ENCODE measurements at regions of chr6 and their contacts with region 1.

Region 1: GRCh38 chr6:722077-722524 is 29.2 kb upstream of the EXOC2 start:
- DNase-seq: peak; percentile 76
- H3K4me3 ChIP-seq: no peak overlapping the region
- H3K27ac ChIP-seq: no peak overlapping the region
- H3K27me3 ChIP-seq: peaks cover 3% of the 10 kb centered on the region
- CTCF ChIP-seq: peak; percentile 98

Region 2: DNA sequence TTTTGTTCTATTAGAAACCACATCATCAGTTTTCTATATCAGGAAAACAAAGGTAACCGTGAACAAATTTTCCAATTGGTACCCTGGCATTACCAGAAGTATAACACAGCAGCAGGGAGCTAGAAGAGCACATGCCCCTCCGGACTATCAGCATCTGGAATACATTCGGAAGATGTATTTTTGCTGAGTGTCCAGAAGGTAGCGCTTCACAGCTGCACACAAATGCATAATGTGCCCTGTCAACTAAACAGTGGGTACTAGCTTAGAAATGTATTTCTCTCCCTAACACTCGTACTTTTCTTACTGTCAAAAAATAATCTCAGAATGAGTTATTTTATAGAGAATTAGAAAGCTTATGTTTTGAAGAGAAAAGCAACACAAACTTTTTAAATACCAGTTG is 142.8 kb before region 1 on chr6:
- CTCF ChIA-PET with region 1: interaction called, 10 read pairs
- POLR2A ChIA-PET with region 1: no interaction called
- DNase-seq: no peak
- H3K4me3 ChIP-seq: no peak overlapping the region
- H3K27ac ChIP-seq: no peak overlapping the region
- H3K27me3 ChIP-seq: no peaks in the 10 kb centered on the region
- CTCF ChIP-seq: peak; percentile 46

Region 3: GRCh38 chr6:606829-607379 is 115.2 kb before region 1 on chr6:
- CTCF ChIA-PET with region 1: interaction called, 11 read pairs
- POLR2A ChIA-PET with region 1: no interaction called
- DNase-seq: no peak
- H3K4me3 ChIP-seq: no peak overlapping the region
- H3K27ac ChIP-seq: no peak overlapping the region
- H3K27me3 ChIP-seq: no peaks in the 10 kb centered on the region
- CTCF ChIP-seq: no peak

Region 4: GRCh38 chr6:692855-693722 is 29.0 kb before region 1 on chr6 and contains the start of gene EXOC2:
- CTCF ChIA-PET with region 1: interaction called, 16 read pairs
- POLR2A ChIA-PET with region 1: no interaction called
- DNase-seq: peak; percentile 36
- H3K4me3 ChIP-seq: peak within 1 kb of the TSS; percentile 94
- H3K27ac ChIP-seq: no peak within 1 kb of the TSS
- H3K27me3 ChIP-seq: no peaks in the 10 kb centered on the region
- CTCF ChIP-seq: 0 out of 2 replicates have a peak, but pooled peaks have one; percentile 16
- polyA plus RNA-seq, gene EXOC2: 27.8 and 33.4 TPM in 2 replicates

Region 5: DNA sequence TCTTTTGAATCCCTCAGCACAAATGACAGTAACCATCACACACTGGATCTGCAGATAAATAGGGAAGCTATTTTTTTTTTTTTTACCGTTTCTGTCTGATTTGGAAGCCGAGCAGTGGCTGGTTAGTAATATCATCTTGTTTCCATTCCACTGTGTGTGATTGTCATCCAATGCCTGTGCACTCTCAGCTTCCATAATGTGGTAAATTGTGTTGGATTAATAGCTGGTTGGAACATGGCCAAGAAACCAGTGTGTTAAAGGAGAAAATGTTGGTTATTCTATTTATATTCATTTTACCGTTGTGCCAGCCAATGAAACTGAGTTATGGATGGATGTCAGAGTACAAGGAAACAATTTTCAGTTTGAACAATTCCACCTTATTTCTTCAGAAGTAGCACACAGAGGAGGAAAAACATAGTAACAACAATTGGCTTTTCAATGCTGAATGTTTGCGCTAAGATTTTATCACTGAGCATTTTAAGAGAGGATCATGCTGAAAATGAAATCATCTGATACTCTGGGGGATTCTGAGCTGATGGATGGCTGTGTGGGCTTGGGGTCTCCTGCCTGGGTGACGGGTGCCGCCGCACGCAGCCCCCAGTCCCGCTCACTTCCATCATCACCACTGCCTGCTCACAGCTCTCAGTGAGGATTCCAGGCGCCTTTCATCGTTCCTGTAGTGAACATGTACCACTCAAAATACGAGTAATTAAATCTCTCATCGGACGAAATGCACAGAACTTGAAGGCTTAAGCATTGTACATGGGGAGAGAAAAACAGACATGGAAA is 11.5 kb after region 1 on chr6:
- CTCF ChIA-PET with region 1: interaction called, 17 read pairs
- POLR2A ChIA-PET with region 1: no interaction called
- DNase-seq: no peak
- H3K4me3 ChIP-seq: no peak overlapping the region
- H3K27ac ChIP-seq: no peak overlapping the region
- H3K27me3 ChIP-seq: peaks cover 11% of the 10 kb centered on the region
- CTCF ChIP-seq: no peak

Region 6: DNA sequence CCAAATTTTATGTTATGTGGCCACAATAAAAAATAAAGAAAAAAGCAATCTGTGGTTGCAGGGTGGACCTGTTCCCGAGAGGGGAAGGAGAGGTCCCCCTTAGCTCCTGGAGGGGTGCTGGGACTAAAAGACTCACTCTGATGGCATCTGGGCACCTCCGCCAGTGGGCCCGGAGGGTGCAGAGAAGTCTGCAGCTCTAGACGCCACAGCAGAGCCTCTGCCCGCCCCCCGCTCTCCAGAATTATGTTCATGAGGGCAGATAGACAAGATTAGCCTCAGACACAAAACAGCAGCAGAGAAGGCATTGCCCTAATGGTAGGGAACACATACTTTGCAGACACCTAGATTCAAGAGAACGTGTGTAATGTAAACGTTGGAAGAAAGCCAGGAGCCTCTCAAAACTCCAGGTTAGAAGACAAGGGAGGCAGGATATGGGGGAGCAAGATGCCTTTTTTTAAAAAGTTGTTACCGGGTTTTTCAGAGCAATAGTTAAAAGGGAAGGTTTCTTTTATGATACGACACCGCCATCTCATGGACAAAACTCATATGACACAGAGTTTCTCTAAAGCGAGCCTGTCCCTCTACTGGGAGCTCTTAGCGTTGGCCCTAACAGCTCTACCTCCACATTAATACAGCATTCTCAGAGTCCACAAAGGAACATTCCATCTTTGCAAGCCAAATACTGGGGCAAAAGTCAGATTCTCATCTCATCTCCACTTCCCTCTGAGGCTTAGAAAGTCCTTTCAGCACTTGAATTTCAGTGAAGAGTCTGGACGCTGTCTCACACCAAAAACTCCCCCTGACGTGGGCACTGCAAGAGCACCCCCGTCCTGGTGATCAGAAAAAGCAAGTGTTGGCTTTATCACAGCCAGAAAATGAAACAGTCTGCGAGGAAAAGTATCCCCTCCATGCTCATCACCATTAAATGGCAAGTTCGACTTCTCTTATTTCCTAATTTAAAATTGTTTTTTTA is 714.5 kb after region 1 on chr6:
- CTCF ChIA-PET with region 1: interaction called, 21 read pairs
- POLR2A ChIA-PET with region 1: no interaction called
- DNase-seq: peak; percentile 36
- H3K4me3 ChIP-seq: no peak overlapping the region
- H3K27ac ChIP-seq: no peak overlapping the region
- H3K27me3 ChIP-seq: peaks cover 11% of the 10 kb centered on the region
- CTCF ChIP-seq: peak; percentile 78